Activated CD8-positive, alpha-beta memory T cell treated with anti-CD3 and anti-CD28 coated beads, Interleukin-2, amount 10 ng/mL, durations not matched to agents 7 days and 5 days (primary cell): ENCODE measurements at regions of chr1 and their contacts with region 1.

Region 1: DNA sequence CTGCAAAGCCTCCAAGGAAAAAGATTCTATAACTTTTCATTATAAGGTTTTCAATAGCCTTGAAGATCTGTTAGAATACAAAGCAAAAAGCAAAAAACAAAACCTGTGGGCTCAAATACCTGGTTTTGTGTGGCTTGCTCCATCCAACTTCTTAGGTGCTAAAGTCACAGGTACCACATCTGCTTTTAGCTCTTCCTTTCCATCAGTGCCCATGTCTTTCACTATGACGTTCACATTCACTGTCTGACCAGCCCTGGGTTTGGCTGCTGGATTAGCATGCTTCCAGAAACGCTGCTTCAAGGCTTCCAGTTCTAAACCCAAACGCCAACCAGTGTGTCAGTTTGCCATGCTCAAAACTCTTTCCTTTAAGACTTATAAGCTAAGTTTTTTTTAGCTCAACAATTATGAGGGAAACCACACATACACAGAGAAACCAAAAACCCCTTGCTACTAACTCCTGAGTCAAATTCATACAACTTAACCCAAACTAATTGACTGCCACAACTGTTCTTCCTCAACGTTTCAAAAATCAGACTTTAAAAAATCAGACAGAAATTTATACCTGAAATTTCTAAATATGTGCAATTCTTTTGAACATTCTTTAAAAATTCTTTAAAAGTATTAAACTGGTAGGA is 16.0 kb downstream of the CLSPN start:
- DNase-seq: no peak
- ATAC-seq: peak; percentile 39
- H3K4me3 Mint-ChIP-seq: no peak overlapping the region
- H3K27ac Mint-ChIP-seq: peak overlapping the region; percentile 66
- H3K4me1 Mint-ChIP-seq: peaks cover 22% of the 10 kb centered on the region
- H3K27me3 Mint-ChIP-seq: no peaks in the 10 kb centered on the region

Region 2: DNA sequence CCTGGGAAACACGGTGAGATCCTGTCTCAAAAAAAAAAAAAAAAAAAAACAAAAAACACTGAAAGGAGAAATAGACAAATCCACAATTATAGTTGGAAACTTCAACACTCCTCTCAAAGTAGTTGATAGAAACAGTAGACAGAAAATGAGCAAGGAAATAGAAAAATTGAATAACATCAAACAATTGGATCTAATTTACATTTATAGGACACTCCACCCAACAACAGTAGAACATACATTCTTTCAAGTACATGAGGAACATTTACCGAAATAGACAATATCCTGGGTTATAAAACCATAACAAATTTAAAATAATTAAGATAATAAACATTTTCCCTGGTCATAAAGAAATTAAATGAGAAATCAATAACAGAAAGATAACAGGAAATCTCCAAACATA is 689.5 kb before region 1 on chr1:
- CTCF ChIA-PET with region 1: no interaction called
- DNase-seq: no peak
- ATAC-seq: no peak
- H3K4me3 Mint-ChIP-seq: no peak overlapping the region
- H3K27ac Mint-ChIP-seq: no peak overlapping the region
- H3K4me1 Mint-ChIP-seq: peaks cover 3% of the 10 kb centered on the region
- H3K27me3 Mint-ChIP-seq: peaks cover 5% of the 10 kb centered on the region

Region 3: DNA sequence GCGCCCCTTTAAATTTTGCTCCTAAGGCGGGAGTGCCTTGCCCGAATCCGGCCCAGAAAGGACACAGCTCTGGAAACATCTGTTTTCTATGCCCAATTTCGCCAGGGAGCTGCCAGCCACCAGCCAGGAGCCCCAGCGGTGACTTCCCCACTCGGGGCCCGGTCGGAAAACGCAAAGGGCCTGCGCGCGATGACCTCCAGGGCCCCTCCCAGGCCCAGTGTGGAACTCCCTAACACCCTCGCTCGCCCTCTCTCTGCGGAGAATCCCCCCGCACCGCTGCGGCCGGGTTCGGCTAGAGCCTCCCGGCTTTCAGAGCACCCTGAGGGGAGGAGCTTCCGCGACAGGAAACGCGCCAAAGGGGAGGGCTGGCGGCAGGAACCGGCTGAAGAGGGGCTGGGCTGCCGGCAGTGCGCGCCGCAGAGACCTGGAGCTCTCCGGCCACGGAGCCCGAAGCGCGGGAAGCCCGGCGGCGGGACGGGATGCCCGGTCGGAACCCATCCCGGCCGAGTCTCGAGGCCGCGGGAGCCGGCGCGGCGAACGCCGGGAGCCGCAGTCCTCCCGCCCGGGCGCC is 15.5 kb after region 1 on chr1:
- CTCF ChIA-PET with region 1: interaction called, 11 read pairs
- DNase-seq: peak; percentile 94
- ATAC-seq: peak; percentile 87
- H3K4me3 Mint-ChIP-seq: peak overlapping the region; percentile 96
- H3K27ac Mint-ChIP-seq: peak overlapping the region; percentile 79
- H3K4me1 Mint-ChIP-seq: peaks cover 31% of the 10 kb centered on the region
- H3K27me3 Mint-ChIP-seq: no peaks in the 10 kb centered on the region

Region 4: DNA sequence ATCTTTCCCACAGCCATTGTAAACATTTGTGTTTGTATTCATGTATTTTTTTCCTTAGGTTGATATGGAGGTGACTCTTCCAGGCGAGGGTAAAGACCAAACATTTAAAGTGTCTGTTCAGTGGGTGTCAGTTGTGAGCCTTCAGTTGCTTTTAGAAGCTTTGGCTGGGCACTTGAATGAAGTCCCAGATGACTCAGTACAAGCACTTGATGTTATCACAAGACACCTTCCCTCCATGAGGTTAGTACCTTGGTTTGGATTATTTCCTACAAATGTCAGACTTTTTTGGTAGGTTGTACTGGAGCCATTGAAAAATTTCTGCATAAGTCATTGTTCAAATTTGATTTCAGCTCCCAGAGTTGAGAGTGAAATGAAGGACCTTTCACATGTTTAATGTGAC is 71.5 kb after region 1 on chr1:
- CTCF ChIA-PET with region 1: no interaction called
- DNase-seq: no peak
- ATAC-seq: no peak
- H3K4me3 Mint-ChIP-seq: no peak overlapping the region
- H3K27ac Mint-ChIP-seq: no peak overlapping the region
- H3K4me1 Mint-ChIP-seq: no peaks in the 10 kb centered on the region
- H3K27me3 Mint-ChIP-seq: no peaks in the 10 kb centered on the region

Region 5: GRCh38 chr1:35882945-35883634 is 129.3 kb after region 1 on chr1 and contains the start of gene AGO1:
- CTCF ChIA-PET with region 1: no interaction called
- DNase-seq: peak; percentile 97
- ATAC-seq: peak; percentile 97
- H3K4me3 Mint-ChIP-seq: peak within 1 kb of the TSS; percentile 87
- H3K27ac Mint-ChIP-seq: peak within 1 kb of the TSS; percentile 80
- H3K4me1 Mint-ChIP-seq: peaks cover 50% of the 10 kb centered on the region
- H3K27me3 Mint-ChIP-seq: no peaks in the 10 kb centered on the region
- total RNA-seq, gene AGO1: 23.7 to 29.3 TPM